Astrocyte of the cerebellum (primary cell): ENCODE measurements at regions of chr10 and their contacts with region 1.

Region 1: DNA sequence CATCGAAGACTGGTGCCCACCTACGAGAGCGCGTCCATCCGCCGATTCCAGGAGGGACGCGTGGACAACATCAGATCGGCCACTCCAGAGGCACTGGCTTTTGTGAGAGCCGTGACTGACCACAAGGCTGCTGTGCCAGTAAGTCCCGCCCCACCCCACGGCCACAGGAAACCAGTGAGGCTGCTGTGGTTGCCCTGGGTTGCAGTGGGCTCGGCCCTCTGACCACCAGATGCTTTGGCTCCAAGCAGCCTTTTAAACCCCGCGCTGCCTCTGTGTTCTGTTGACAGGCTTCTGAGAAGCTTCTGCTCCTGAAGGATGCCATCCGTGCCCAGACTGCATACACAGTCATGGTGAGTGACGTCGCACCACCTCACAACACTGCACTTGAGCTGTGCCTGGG is 24.4 kb upstream of the C10orf53 start:
- DNase-seq: no peak
- H3K4me3 ChIP-seq: no peak overlapping the region
- CTCF ChIP-seq: no peak

Region 2: GRCh38 chr10:48684792-48685623 is 970.1 kb before region 1 on chr10 and contains the start of gene WDFY4:
- in situ Hi-C with region 1: no loop called
- DNase-seq: no peak
- H3K4me3 ChIP-seq: no peak within 1 kb of the TSS
- CTCF ChIP-seq: no peak

Region 3: DNA sequence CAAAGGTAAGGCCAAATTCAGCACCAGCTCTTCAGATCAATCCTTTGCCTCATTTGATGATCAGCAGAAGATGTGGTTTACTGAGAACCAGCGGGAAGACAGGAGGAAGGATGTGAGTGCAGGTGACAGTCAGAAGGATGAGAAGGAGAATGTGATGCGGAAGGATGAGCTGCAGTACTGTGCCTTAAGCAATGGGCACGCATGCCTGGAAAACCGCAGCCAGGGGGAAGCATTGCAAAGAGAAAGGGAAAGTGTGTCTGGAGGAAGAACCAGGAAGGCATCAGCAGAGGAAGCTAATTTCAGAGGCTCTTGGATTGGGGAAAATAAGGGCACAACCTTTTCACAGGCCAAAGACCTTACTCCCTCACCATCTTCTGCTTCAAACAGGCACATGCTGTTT is 330.4 kb before region 1 on chr10:
- in situ Hi-C with region 1: no loop called
- DNase-seq: no peak
- H3K4me3 ChIP-seq: no peak overlapping the region
- CTCF ChIP-seq: peak; percentile 38

Region 4: GRCh38 chr10:49690698-49691356 is 35.7 kb after region 1 on chr10:
- in situ Hi-C with region 1: loop called (anchors 5 kb)
- DNase-seq: no peak
- H3K4me3 ChIP-seq: no peak overlapping the region
- CTCF ChIP-seq: no peak